Panc1 (cell line): ENCODE measurements at regions of chr3 and their contacts with region 1.

Region 1: DNA sequence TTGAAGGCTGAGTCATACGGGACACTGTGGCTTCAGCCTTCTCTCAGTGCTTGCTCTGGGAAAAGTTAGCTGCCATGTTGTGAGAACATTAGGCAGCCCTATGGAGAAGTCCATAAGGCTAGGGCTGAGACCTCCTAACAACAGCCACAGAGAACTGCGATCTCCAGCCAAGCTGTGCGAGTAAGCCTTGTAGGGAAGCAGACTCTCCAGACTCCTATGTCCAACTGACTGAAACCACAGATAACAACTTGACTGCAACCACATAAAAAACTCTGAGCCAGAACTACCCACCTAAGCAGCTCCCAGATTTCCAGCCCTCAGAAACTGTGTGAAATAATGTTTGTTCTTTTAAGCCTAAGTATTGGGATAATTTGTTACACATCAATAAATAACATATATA is 40.7 kb downstream of the DENND6A start:
- DNase-seq: no peak
- ATAC-seq: no peak
- H3K4me3 ChIP-seq: no peak overlapping the region
- H3K27ac ChIP-seq: no peak overlapping the region
- H3K4me1 ChIP-seq: no peaks in the 10 kb centered on the region
- H3K27me3 ChIP-seq: no peaks in the 10 kb centered on the region
- CTCF ChIP-seq: no peak

Region 2: GRCh38 chr3:57826245-57826951 is 174.2 kb after region 1 on chr3:
- CTCF ChIA-PET with region 1: no interaction called
- POLR2A ChIA-PET with region 1: interaction called, 11 read pairs
- in situ Hi-C with region 1: no loop called
- intact Hi-C with region 1: no loop called
- DNase-seq: no peak
- ATAC-seq: no peak
- H3K4me3 ChIP-seq: no peak overlapping the region
- H3K27ac ChIP-seq: no peak overlapping the region
- H3K4me1 ChIP-seq: peaks cover 16% of the 10 kb centered on the region; the same call in 1 of the 2 replicates
- H3K27me3 ChIP-seq: no peaks in the 10 kb centered on the region
- CTCF ChIP-seq: no peak; the same call in 1 of the 2 replicates